Activated CD8-positive, alpha-beta T cell treated with anti-CD3 and anti-CD28 coated beads, Interleukin-2, amount 10 ng/mL, durations not matched to agents 7 days and 5 days (primary cell): ENCODE measurements at regions of chr2 and their contacts with region 1.

Region 1: GRCh38 chr2:218448934-218449333 is 30.0 kb downstream of the VIL1 start:
- DNase-seq: no peak
- ATAC-seq: no peak
- H3K4me3 Mint-ChIP-seq: no peak overlapping the region
- H3K27ac Mint-ChIP-seq: no peak overlapping the region
- H3K4me1 Mint-ChIP-seq: peaks cover 5% of the 10 kb centered on the region
- H3K27me3 Mint-ChIP-seq: no peaks in the 10 kb centered on the region

Region 2: DNA sequence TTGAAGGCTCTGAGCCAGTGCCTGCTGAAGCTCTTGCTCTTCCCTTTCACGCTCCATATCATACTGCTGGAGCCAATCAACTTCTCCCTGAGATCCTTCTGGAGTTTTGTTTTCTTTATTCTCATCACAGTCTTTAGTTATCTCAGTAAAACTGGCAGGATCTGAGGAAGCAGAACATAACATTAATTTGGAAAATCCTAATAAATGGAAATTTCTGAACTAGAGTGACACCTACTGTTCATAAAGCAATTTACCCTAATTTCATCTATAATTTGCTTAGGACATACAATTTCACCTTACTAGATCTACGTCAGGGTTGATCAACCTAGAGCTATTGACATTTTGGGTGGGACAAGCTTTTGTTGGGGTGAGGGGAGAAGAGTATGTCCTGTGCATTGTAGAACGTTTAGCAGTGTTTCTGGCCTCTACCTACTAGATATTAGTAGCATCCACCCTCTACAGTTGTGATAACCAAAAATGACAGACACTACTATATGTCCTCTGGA is 17.1 kb after region 1 on chr2:
- CTCF ChIA-PET with region 1: interaction called, 10 read pairs
- POLR2A ChIA-PET with region 1: no interaction called
- DNase-seq: no peak
- ATAC-seq: peak; percentile 39
- H3K4me3 Mint-ChIP-seq: no peak overlapping the region
- H3K27ac Mint-ChIP-seq: no peak overlapping the region
- H3K4me1 Mint-ChIP-seq: peaks cover 9% of the 10 kb centered on the region
- H3K27me3 Mint-ChIP-seq: no peaks in the 10 kb centered on the region

Region 3: GRCh38 chr2:218717262-218717661 is 268.3 kb after region 1 on chr2:
- CTCF ChIA-PET with region 1: no interaction called
- POLR2A ChIA-PET with region 1: no interaction called
- DNase-seq: no peak
- ATAC-seq: no peak
- H3K4me3 Mint-ChIP-seq: no peak overlapping the region
- H3K27ac Mint-ChIP-seq: no peak overlapping the region
- H3K4me1 Mint-ChIP-seq: peaks cover 15% of the 10 kb centered on the region
- H3K27me3 Mint-ChIP-seq: no peaks in the 10 kb centered on the region